Ascending aorta (tissue), 2 donors: ENCODE measurements at regions of chr3 and their contacts with region 1.

Region 1: GRCh38 chr3:195259475-195260279 is 11.3 kb downstream of the XXYLT1 start:
- DNase-seq: peak; percentile 50 to 95
- H3K4me3 ChIP-seq: peak overlapping the region; percentile 77 to 84
- H3K27ac ChIP-seq: peak overlapping the region; percentile 80 to 86
- H3K4me1 ChIP-seq: peaks cover 0 to 15% of the 10 kb centered on the region in 2 donors
- H3K27me3 ChIP-seq: no peaks in the 10 kb centered on the region
- CTCF ChIP-seq: peak in 1 of 3 experiments; percentile 100

Region 2: GRCh38 chr3:194682694-194683310 is 576.9 kb before region 1 on chr3:
- intact Hi-C with region 1: loop called (anchors 1 kb)
- DNase-seq: peak; percentile 37 to 85
- H3K4me3 ChIP-seq: no peak overlapping the region
- H3K27ac ChIP-seq: peak overlapping the region; percentile 4 to 31
- H3K4me1 ChIP-seq: peaks cover 9 to 12% of the 10 kb centered on the region in 2 donors
- H3K27me3 ChIP-seq: no peaks in the 10 kb centered on the region
- CTCF ChIP-seq: peak; percentile 78 to 89 (median 87)

Region 3: GRCh38 chr3:194976049-194976451 is 283.6 kb before region 1 on chr3:
- intact Hi-C with region 1: loop called (anchors 2 kb)
- DNase-seq: peak in 1 of 2 donors; percentile 83
- H3K4me3 ChIP-seq: no peak overlapping the region
- H3K27ac ChIP-seq: peak overlapping the region; percentile 67 to 76
- H3K4me1 ChIP-seq: peaks cover 14 to 17% of the 10 kb centered on the region in 2 donors
- H3K27me3 ChIP-seq: no peaks in the 10 kb centered on the region
- CTCF ChIP-seq: no peak

Region 4: GRCh38 chr3:195117978-195118581 is 141.6 kb before region 1 on chr3:
- intact Hi-C with region 1: no loop called
- DNase-seq: no peak
- H3K4me3 ChIP-seq: no peak overlapping the region
- H3K27ac ChIP-seq: no peak overlapping the region
- H3K4me1 ChIP-seq: no peaks in the 10 kb centered on the region
- H3K27me3 ChIP-seq: no peaks in the 10 kb centered on the region
- CTCF ChIP-seq: no peak

Region 5: DNA sequence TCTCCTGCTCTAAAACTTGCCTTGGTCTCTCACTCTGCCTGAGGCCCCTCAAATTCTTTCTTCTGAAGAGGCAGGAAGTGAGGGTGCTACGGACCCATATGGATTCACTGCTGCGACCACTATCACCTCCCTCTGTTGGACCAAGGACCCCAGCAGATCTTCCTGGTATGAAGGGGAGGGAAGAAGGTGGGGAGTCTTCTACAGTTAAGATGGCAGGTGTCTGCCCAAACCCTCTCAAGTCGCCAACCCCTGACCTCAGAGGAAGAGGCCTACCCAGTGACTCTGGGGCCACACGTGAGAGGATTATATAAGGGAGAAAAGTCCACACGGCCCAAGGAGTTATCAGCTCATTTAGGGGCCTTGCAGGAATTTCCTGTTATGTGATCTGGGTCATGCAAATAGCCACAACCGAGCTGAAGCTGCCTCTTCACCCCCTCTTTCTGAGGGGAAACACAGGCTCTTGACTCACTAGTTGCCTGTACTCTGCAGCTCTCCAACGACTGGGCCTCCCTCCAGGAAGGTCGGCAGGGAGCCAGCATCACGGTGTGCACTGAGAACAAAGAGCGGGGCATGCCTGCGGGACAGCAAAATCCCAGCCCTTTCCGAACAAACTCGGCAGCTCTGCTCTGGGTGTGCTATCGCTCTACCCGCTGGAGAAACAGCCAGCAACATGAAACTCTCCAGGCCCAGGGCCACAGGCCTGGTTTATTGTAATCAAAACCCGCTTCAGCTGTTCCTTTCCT is 104.7 kb before region 1 on chr3:
- intact Hi-C with region 1: loop called (anchors 2 kb)
- DNase-seq: peak; percentile 21 to 83
- H3K4me3 ChIP-seq: no peak overlapping the region
- H3K27ac ChIP-seq: peak overlapping the region; percentile 45 to 57
- H3K4me1 ChIP-seq: peaks cover 4 to 16% of the 10 kb centered on the region in 2 donors
- H3K27me3 ChIP-seq: no peaks in the 10 kb centered on the region
- CTCF ChIP-seq: no peak

Region 6: DNA sequence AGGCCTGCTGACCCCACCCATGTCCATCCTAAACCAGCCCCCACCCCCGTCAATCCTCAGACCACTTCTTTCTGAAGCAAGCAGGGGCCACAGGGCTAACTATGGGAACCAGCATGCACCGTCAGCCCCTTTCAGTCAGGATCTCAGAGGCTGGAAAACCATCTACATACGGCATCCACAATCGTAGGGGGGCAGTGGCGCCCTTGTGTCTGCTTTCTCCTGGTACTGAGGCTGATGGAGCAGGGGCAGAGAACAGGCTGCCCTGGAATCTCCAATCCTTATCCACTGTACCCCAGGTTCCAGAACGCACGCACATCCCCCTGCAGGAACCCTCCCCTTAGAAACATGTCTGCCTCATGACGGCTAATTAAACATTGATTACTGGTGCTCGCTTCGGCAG is 45.3 kb before region 1 on chr3:
- intact Hi-C with region 1: no loop called
- DNase-seq: no peak
- H3K4me3 ChIP-seq: no peak overlapping the region
- H3K27ac ChIP-seq: no peak overlapping the region
- H3K4me1 ChIP-seq: peaks cover 8 to 16% of the 10 kb centered on the region in 2 donors
- H3K27me3 ChIP-seq: no peaks in the 10 kb centered on the region
- CTCF ChIP-seq: no peak

Region 7: GRCh38 chr3:195226900-195227447 is 32.7 kb before region 1 on chr3:
- intact Hi-C with region 1: loop called (anchors 1 kb)
- DNase-seq: no peak
- H3K4me3 ChIP-seq: no peak overlapping the region
- H3K27ac ChIP-seq: no peak overlapping the region
- H3K4me1 ChIP-seq: peaks cover 15 to 24% of the 10 kb centered on the region in 2 donors
- H3K27me3 ChIP-seq: no peaks in the 10 kb centered on the region
- CTCF ChIP-seq: no peak